HCT116 (cell line): ENCODE measurements at regions of chr12 and their contacts with region 1.

Region 1: GRCh38 chr12:70733385-70733784 is 96.2 kb upstream of the PTPRB start:
- DNase-seq: peak; percentile 76
- ATAC-seq: peak; percentile 86
- H3K4me3 ChIP-seq: no peak overlapping the region
- H3K27ac ChIP-seq: no peak overlapping the region
- H3K4me1 ChIP-seq: no peaks in the 10 kb centered on the region
- H3K27me3 ChIP-seq: no peaks in the 10 kb centered on the region
- CTCF ChIP-seq: peak; percentile 66 to 89 (median 70)
- POLR2A ChIP-seq: no peak
- RAD21 ChIP-seq: peak; percentile 92

Region 2: GRCh38 chr12:69779928-69780327 is 953.5 kb before region 1 on chr12:
- CTCF ChIA-PET with region 1: no interaction called
- POLR2A ChIA-PET with region 1: no interaction called
- RAD21 ChIA-PET with region 1: no interaction called
- intact Hi-C with region 1: loop called (anchors 5 kb)
- DNase-seq: peak; percentile 27
- ATAC-seq: peak; percentile 93
- H3K4me3 ChIP-seq: no peak overlapping the region
- H3K27ac ChIP-seq: no peak overlapping the region
- H3K4me1 ChIP-seq: no peaks in the 10 kb centered on the region
- H3K27me3 ChIP-seq: no peaks in the 10 kb centered on the region
- CTCF ChIP-seq: peak; percentile 34 to 84 (median 75); a peak in 5 of 6 replicates
- POLR2A ChIP-seq: no peak
- RAD21 ChIP-seq: peak; percentile 71

Region 3: GRCh38 chr12:70772836-70773235 is 39.5 kb after region 1 on chr12:
- CTCF ChIA-PET with region 1: no interaction called
- POLR2A ChIA-PET with region 1: no interaction called
- RAD21 ChIA-PET with region 1: no interaction called
- intact Hi-C with region 1: no loop called
- DNase-seq: no peak
- ATAC-seq: no peak
- H3K4me3 ChIP-seq: no peak overlapping the region
- H3K27ac ChIP-seq: no peak overlapping the region
- H3K4me1 ChIP-seq: no peaks in the 10 kb centered on the region
- H3K27me3 ChIP-seq: no peaks in the 10 kb centered on the region
- CTCF ChIP-seq: no peak
- POLR2A ChIP-seq: no peak
- RAD21 ChIP-seq: no peak

Region 4: DNA sequence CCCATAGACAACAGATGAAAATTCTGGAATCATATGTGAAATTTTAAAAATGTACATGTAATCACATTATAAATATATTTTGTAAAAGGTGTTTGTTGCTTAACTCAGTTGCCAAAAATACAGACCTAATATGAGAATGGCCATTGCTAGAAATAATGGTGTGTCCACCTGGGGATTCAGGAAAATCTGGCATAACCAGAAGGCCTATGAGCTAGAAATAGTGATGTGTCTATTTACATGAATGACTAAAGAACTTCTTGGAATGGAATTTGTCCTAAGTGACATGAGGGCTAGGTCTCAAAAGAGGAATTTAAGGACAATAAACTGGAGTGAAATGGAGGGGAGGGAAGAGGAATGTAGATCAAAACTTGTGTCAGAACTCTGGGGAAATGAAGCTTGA is 60.7 kb after region 1 on chr12:
- CTCF ChIA-PET with region 1: no interaction called
- POLR2A ChIA-PET with region 1: no interaction called
- RAD21 ChIA-PET with region 1: no interaction called
- intact Hi-C with region 1: no loop called
- DNase-seq: no peak
- ATAC-seq: no peak
- H3K4me3 ChIP-seq: no peak overlapping the region
- H3K27ac ChIP-seq: no peak overlapping the region
- H3K4me1 ChIP-seq: no peaks in the 10 kb centered on the region
- H3K27me3 ChIP-seq: no peaks in the 10 kb centered on the region
- CTCF ChIP-seq: no peak
- POLR2A ChIP-seq: no peak
- RAD21 ChIP-seq: no peak

Region 5: DNA sequence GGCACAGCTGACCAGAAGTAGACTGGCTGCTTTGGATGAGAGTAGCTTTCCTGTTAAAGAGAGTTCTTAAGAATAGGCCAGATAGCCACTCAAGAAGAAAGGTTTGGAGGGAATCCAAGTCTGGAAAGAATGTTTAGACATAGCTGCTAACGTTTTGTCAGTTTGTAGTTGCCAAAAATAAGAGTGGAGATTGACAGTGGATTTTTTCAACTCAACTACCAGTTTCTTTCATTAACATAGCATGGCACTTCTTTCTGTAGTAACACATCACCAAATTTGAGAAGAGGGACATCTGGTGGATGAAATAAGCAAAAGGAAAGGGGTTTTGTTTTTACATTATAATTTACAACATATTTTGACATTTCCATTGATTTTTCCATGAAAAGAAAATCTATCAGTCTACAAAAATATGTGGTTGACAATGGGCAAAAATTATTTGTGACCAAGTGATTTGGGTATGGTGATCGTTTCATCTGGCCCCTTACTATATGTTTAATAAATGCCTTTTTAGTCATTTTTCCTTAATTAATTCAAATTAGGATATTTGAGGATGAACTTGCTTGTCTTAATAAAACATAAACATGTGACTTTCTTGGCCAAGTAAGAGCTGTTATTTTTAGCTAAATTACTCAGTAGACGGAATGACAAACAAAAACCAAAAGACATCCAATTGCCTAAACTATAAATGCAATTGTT is 116.0 kb after region 1 on chr12:
- CTCF ChIA-PET with region 1: interaction called, 44 read pairs
- POLR2A ChIA-PET with region 1: interaction called, 3 read pairs
- RAD21 ChIA-PET with region 1: interaction called in 1 of 2 experiments, 4 read pairs
- intact Hi-C with region 1: loop called (anchors 1 kb)
- DNase-seq: peak; percentile 16
- ATAC-seq: peak; percentile 44; the same call in 1 of the 2 replicates
- H3K4me3 ChIP-seq: no peak overlapping the region
- H3K27ac ChIP-seq: no peak overlapping the region
- H3K4me1 ChIP-seq: no peaks in the 10 kb centered on the region
- H3K27me3 ChIP-seq: no peaks in the 10 kb centered on the region
- CTCF ChIP-seq: peak; percentile 27 to 70 (median 59); a peak in 4 of 6 replicates
- POLR2A ChIP-seq: no peak
- RAD21 ChIP-seq: peak; percentile 74

Region 6: DNA sequence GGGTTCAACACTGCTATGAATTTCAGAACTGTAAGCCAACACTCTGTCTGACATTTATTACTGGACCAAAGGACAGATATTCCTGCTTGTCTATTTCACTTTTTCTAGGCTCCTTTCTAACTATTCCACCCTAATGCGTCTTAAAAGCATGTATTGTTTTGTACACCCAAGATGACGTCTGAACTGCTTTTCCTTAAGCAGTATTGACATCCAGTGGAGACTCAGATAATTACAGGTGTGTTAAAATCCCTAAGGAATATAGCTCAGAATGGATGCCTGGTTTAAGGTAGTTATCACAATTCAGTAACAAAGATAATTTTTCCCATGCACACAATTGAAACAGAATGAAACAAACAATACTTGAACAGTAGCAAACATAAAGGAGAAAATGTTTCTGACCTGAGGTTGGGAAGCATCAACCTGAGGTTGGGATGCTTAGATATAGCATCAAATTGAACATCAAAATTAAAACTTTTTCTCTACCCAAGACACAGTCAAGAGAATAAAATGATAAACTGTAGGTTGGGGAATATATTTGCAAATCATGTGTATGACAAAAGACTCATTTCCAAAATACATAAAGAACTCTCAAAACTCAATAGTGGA is 280.9 kb after region 1 on chr12:
- CTCF ChIA-PET with region 1: interaction called, 68 read pairs
- POLR2A ChIA-PET with region 1: interaction called, 4 read pairs
- RAD21 ChIA-PET with region 1: interaction called, 6 to 13 read pairs
- intact Hi-C with region 1: loop called (anchors 1 kb)
- DNase-seq: peak; percentile 51
- ATAC-seq: peak; percentile 83
- H3K4me3 ChIP-seq: no peak overlapping the region
- H3K27ac ChIP-seq: no peak overlapping the region
- H3K4me1 ChIP-seq: peaks cover 0 to 5% of the 10 kb centered on the region in 2 experiments; a peak in 1 of 4 replicates
- H3K27me3 ChIP-seq: no peaks in the 10 kb centered on the region
- CTCF ChIP-seq: peak; percentile 34 to 75 (median 68); a peak in 4 of 6 replicates
- POLR2A ChIP-seq: no peak
- RAD21 ChIP-seq: peak; percentile 90